ENCODE measurements at regions of chr7 and their contacts with region 1.

Region 1: DNA sequence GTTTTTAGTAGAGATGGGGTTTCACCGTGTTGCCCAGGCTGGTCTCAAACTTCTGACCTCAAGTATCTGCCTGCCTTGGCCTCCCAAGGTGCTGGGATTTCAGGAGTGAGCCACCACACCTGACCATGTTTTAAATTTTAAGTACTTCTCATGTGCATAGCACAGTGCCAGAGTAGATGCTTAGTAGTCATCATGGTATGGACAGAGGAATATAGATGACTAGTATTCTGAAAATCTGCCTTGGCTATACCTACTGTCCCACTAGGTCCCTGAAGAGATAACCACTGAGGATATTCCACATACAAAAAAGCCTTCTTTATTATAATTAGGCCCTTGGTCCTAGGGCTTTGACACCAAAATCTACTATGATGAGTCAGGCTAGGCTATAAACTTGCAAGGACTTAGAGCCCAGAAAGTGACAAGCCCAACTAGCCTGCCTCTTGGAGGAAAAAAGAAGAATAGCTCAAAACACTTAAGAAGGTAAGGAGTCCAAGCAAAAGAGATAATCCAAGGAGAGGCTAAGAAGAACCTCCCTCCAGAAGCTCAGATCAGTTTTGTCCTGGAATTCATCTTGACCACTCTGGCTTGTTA is 34.0 kb downstream of the LUC7L2 start:
- DNase-seq: no peak
- ATAC-seq: no peak
- H3K4me3 ChIP-seq: no peak overlapping the region
- H3K4me3 Mint-ChIP-seq: peak overlapping the region in 9 of 10 donors; percentile 4 to 84 (median 53)
- H3K27ac ChIP-seq: peak overlapping the region; percentile 10
- H3K27ac Mint-ChIP-seq: peak overlapping the region in 8 of 9 donors; percentile 2 to 82 (median 56)
- H3K4me1 ChIP-seq: peaks cover 10 to 19% of the 10 kb centered on the region in 2 donors
- H3K4me1 Mint-ChIP-seq: peaks cover 19 to 77% (median 51%) of the 10 kb centered on the region in 7 donors
- H3K27me3 ChIP-seq: no peaks in the 10 kb centered on the region
- H3K27me3 Mint-ChIP-seq: no peaks in the 10 kb centered on the region

Region 2: GRCh38 chr7:139370301-139370942 is 23.3 kb before region 1 on chr7:
- CTCF ChIA-PET with region 1: no interaction called
- POLR2A ChIA-PET with region 1: interaction called, 3 read pairs
- intact Hi-C with region 1: loop called in 1 of 2 experiments (anchors 2 kb)
- DNase-seq: no peak
- ATAC-seq: no peak
- H3K4me3 ChIP-seq: no peak overlapping the region
- H3K4me3 Mint-ChIP-seq: peak overlapping the region in 8 of 10 donors; percentile 31 to 58 (median 39)
- H3K27ac ChIP-seq: no peak overlapping the region
- H3K27ac Mint-ChIP-seq: peak overlapping the region in 5 of 9 donors; percentile 9 to 83 (median 36)
- H3K4me1 ChIP-seq: peaks cover 14 to 35% of the 10 kb centered on the region in 2 donors
- H3K4me1 Mint-ChIP-seq: peaks cover 44 to 95% (median 83%) of the 10 kb centered on the region in 7 donors
- H3K27me3 ChIP-seq: no peaks in the 10 kb centered on the region
- H3K27me3 Mint-ChIP-seq: no peaks in the 10 kb centered on the region

Region 3: DNA sequence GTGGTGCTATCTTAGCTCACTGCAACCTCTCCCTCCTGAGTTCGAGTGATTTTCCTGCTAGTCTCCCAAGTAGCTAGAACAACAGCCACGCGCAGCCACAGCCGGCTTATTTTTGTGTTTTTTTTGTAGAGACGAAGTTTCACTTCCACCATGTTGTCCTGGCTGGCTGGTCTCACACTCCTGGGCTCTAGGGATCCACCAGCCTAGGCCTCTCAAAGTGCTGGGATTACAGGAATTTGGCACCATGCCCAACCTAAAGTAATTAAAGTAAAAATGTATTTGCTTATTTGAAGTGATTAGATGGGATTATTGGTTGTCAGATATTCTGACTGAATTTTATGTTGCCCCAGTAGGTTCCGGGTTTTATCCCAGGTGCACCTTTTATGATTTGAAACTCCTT is 11.3 kb before region 1 on chr7:
- CTCF ChIA-PET with region 1: no interaction called
- POLR2A ChIA-PET with region 1: no interaction called
- intact Hi-C with region 1: loop called in 1 of 2 experiments (anchors 2 kb)
- DNase-seq: no peak
- ATAC-seq: no peak
- H3K4me3 ChIP-seq: no peak overlapping the region
- H3K4me3 Mint-ChIP-seq: no peak overlapping the region
- H3K27ac ChIP-seq: no peak overlapping the region
- H3K27ac Mint-ChIP-seq: no peak overlapping the region
- H3K4me1 ChIP-seq: no peaks in the 10 kb centered on the region
- H3K4me1 Mint-ChIP-seq: peaks cover 3 to 14% (median 6%) of the 10 kb centered on the region in 7 donors
- H3K27me3 ChIP-seq: no peaks in the 10 kb centered on the region
- H3K27me3 Mint-ChIP-seq: no peaks in the 10 kb centered on the region

Region 4: DNA sequence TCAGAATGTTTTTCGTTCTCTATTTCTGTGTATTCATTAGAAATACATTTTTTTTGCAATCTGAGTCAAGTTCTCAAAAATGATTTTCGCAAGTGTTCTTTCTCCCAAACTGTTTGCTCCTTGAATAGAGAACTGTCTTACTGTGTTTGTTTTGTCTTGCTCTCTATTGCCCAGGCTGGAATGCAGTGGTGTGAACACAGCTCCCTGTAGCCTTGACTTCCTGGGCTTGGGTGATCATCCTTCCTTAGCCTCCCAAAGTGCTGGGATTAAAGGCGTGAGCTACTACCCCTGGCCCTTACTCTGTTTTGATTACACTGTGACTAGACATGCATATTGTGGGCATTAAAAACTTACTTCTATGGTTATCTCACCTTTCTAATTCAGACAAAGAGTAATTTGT is 22.7 kb after region 1 on chr7:
- CTCF ChIA-PET with region 1: interaction called, 5 read pairs
- POLR2A ChIA-PET with region 1: no interaction called
- intact Hi-C with region 1: loop called in 1 of 2 experiments (anchors 2 kb)
- DNase-seq: no peak
- ATAC-seq: no peak
- H3K4me3 ChIP-seq: no peak overlapping the region
- H3K4me3 Mint-ChIP-seq: no peak overlapping the region
- H3K27ac ChIP-seq: no peak overlapping the region
- H3K27ac Mint-ChIP-seq: peak overlapping the region in 5 of 9 donors; percentile 48 to 70 (median 61)
- H3K4me1 ChIP-seq: no peaks in the 10 kb centered on the region
- H3K4me1 Mint-ChIP-seq: peaks cover 0 to 7% (median 3%) of the 10 kb centered on the region in 7 donors
- H3K27me3 ChIP-seq: no peaks in the 10 kb centered on the region
- H3K27me3 Mint-ChIP-seq: no peaks in the 10 kb centered on the region

Region 5: DNA sequence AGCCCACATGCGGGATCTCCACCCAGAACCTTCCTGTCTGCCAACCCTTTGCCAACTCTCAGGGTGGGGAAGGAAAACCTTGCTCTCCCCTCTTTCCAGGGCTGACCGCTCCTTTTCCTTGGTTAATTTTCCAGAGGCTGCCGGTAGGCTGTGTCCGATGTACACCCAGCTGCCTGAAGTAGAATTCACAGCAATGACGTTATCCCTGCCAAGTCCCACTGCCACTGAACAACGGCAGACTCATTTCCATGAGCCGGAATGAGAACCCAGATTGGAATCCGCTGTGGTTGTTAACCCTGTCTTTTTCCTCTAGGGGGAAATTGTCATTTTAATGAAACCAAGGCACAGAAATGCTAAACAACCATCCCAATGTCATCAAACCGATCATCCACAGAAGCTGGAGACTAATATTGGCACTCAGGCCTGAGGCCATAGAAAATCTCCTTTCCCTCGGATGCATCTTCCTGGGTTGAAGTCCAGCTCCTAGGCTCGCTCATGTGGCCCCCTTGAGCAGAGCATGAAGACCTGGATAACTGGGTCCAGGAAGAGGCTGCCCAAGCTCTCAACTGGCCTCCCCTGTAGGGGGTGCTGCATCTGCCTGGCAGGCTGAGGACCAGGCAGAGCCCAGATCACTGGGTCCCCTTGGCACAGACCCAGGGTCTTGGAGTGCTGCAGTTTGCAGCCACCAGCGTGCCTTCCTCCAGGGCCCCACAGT is 59.4 kb after region 1 on chr7:
- CTCF ChIA-PET with region 1: no interaction called
- POLR2A ChIA-PET with region 1: no interaction called
- intact Hi-C with region 1: no loop called
- DNase-seq: no peak
- ATAC-seq: no peak
- H3K4me3 ChIP-seq: no peak overlapping the region
- H3K4me3 Mint-ChIP-seq: no peak overlapping the region
- H3K27ac ChIP-seq: no peak overlapping the region
- H3K27ac Mint-ChIP-seq: no peak overlapping the region
- H3K4me1 ChIP-seq: no peaks in the 10 kb centered on the region
- H3K4me1 Mint-ChIP-seq: no peaks in the 10 kb centered on the region
- H3K27me3 ChIP-seq: no peaks in the 10 kb centered on the region
- H3K27me3 Mint-ChIP-seq: no peaks in the 10 kb centered on the region

Region 6: GRCh38 chr7:139471740-139472353 is 78.1 kb after region 1 on chr7:
- CTCF ChIA-PET with region 1: no interaction called
- POLR2A ChIA-PET with region 1: no interaction called
- intact Hi-C with region 1: no loop called
- DNase-seq: no peak
- ATAC-seq: no peak
- H3K4me3 ChIP-seq: no peak overlapping the region
- H3K4me3 Mint-ChIP-seq: no peak overlapping the region
- H3K27ac ChIP-seq: no peak overlapping the region
- H3K27ac Mint-ChIP-seq: no peak overlapping the region
- H3K4me1 ChIP-seq: no peaks in the 10 kb centered on the region
- H3K4me1 Mint-ChIP-seq: no peaks in the 10 kb centered on the region
- H3K27me3 ChIP-seq: no peaks in the 10 kb centered on the region
- H3K27me3 Mint-ChIP-seq: peaks cover 0 to 3% (median 0%) of the 10 kb centered on the region in 5 donors

Region 7: GRCh38 chr7:139645572-139646523 is 252.1 kb after region 1 on chr7:
- CTCF ChIA-PET with region 1: no interaction called
- POLR2A ChIA-PET with region 1: no interaction called
- intact Hi-C with region 1: no loop called
- DNase-seq: peak; percentile 72 to 93 (median 80)
- ATAC-seq: peak; percentile 73
- H3K4me3 ChIP-seq: no peak overlapping the region
- H3K4me3 Mint-ChIP-seq: peak overlapping the region in 8 of 10 donors; percentile 44 to 77 (median 61)
- H3K27ac ChIP-seq: no peak overlapping the region
- H3K27ac Mint-ChIP-seq: peak overlapping the region in 7 of 9 donors; percentile 46 to 92 (median 64)
- H3K4me1 ChIP-seq: peaks cover 0 to 78% of the 10 kb centered on the region in 2 donors
- H3K4me1 Mint-ChIP-seq: peaks cover 61 to 96% (median 87%) of the 10 kb centered on the region in 7 donors
- H3K27me3 ChIP-seq: no peaks in the 10 kb centered on the region
- H3K27me3 Mint-ChIP-seq: no peaks in the 10 kb centered on the region

Measured in naive thymus-derived CD4-positive, alpha-beta T cell (primary cell).